ENCODE measurements at regions of chr19 and their contacts with region 1.

Region 1: GRCh38 chr19:1445185-1445931 is 4.6 kb upstream of the APC2 start:
- DNase-seq: peak in 5 of 6 donors; percentile 53 to 90 (median 76)
- ATAC-seq: peak; percentile 88 to 97 (median 92)
- H3K4me3 ChIP-seq: peak overlapping the region in 2 of 4 donors; percentile 27 to 30
- H3K27ac ChIP-seq: no peak overlapping the region
- H3K4me1 ChIP-seq: peaks cover 0 to 18% (median 0%) of the 10 kb centered on the region in 3 donors
- H3K27me3 ChIP-seq: peaks cover 0 to 17% (median 3%) of the 10 kb centered on the region in 4 donors
- CTCF ChIP-seq: peak; percentile 86 to 96 (median 91)

Region 2: DNA sequence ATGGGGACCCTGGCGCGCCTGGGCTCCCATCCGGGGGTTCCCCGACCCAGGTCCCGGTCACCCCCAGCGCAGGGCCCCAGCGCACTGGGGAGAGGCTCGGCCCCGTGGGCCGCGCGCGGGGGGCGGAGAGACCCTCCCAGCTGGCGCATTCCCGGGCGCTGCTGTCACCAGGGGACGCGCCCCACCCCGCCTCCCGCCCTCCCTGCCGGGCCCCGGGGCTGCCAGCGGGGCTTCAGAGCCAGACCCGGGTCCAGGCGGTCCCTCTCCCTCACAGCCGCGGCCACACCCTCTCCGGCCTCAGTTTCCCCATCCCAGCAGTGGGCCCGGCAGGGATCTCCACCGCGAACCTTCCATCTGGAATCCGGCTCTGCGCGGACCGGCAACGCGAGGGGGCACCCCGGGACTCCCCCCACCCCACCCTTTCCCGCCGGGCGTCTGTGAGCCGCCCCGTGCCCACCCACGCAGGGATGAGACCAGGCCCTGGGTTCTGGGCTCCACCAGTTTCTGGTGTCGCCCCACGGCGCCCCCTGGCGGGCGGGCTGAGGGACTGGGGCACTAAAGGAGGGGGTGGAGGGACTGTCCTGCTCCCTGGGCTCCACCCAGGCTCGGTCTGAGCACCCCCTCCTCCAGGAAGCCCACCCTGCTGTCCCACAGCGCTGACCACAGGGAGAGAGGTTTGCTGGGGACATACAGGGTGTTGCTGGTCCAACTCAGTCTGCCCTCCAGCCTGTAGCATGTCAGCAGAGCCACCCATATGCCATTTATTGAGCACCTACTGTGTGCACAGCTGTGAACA is 68.3 kb after region 1 on chr19:
- intact Hi-C with region 1: loop called in 1 of 3 experiments (anchors 10 kb)
- DNase-seq: peak in 5 of 6 donors; percentile 53 to 87 (median 76)
- ATAC-seq: peak; percentile 71 to 80 (median 78)
- H3K4me3 ChIP-seq: peak overlapping the region in 3 of 4 donors; percentile 18 to 48 (median 25)
- H3K27ac ChIP-seq: no peak overlapping the region
- H3K4me1 ChIP-seq: no peaks in the 10 kb centered on the region
- H3K27me3 ChIP-seq: no peaks in the 10 kb centered on the region
- CTCF ChIP-seq: peak; percentile 47 to 53 (median 51)

Region 3: GRCh38 chr19:1577090-1577928 is 132.0 kb after region 1 on chr19:
- intact Hi-C with region 1: no loop called
- DNase-seq: peak in 1 of 6 donors; percentile 62
- ATAC-seq: peak in 2 of 4 donors; percentile 5 to 19
- H3K4me3 ChIP-seq: no peak overlapping the region
- H3K27ac ChIP-seq: no peak overlapping the region
- H3K4me1 ChIP-seq: no peaks in the 10 kb centered on the region
- H3K27me3 ChIP-seq: no peaks in the 10 kb centered on the region
- CTCF ChIP-seq: no peak

Measured in pancreas (tissue), 10 donors.